Right cardiac atrium (tissue), 5 donors: ENCODE measurements at regions of chr18 and their contacts with region 1.

Region 1: GRCh38 chr18:62584241-62585120 is 61.7 kb downstream of the ZCCHC2 start:
- DNase-seq: peak; percentile 80 to 94 (median 91)
- ATAC-seq: peak; percentile 85 to 87
- H3K4me3 ChIP-seq: no peak overlapping the region
- H3K27ac ChIP-seq: no peak overlapping the region
- H3K4me1 ChIP-seq: no peaks in the 10 kb centered on the region
- H3K27me3 ChIP-seq: no peaks in the 10 kb centered on the region

Region 2: GRCh38 chr18:62186774-62187542 is 397.5 kb before region 1 on chr18 and contains the starts of genes PIGN and RELCH:
- intact Hi-C with region 1: loop called in 2 of 4 experiments (anchors 10 kb)
- DNase-seq: peak; percentile 95 to 97 (median 96)
- ATAC-seq: peak; percentile 99 to 100
- H3K4me3 ChIP-seq: peak within 1 kb of the TSS; percentile 65
- H3K27ac ChIP-seq: peak within 1 kb of the TSS; percentile 88
- H3K4me1 ChIP-seq: no peaks in the 10 kb centered on the region
- H3K27me3 ChIP-seq: no peaks in the 10 kb centered on the region
- total RNA-seq, gene PIGN: 14.4 to 21.6 (median 16.4) TPM
- total RNA-seq, gene RELCH: 13.5 to 22.7 (median 17.2) TPM

Region 3: DNA sequence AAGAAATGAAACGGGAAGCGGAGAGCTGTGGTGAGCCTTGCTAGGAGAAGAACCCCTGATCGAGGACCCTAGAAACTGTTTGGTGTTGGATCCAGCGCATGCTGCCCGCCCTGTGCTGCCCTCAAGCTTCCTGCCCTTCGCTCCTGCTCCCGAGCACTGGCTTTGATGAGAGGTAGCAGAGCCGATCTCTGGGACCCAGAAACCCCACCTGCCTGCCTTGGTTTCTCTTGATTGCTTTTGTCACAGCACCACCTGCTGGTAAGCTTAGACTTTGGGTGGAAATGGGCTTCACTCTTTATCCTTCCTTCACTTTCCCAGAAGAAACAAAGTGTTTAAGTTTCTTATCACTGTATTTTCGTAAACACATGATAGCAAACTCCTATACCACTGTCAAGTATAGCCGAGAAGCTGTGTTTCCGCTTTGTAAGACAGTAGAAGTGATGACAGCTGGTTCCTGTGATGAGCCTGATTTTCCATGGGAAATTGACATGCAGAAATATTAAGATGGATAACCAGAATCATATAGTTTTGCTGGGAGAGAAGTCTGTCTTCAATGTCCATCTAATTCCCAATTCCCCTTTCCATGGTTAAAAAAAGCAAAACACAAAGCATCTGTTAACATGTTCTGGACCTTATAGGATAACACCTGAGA is 398.2 kb after region 1 on chr18:
- intact Hi-C with region 1: loop called (anchors 5 kb)
- DNase-seq: peak; percentile 41 to 69 (median 66)
- ATAC-seq: peak; percentile 67 to 69
- H3K4me3 ChIP-seq: peak overlapping the region; percentile 36
- H3K27ac ChIP-seq: no peak overlapping the region
- H3K4me1 ChIP-seq: no peaks in the 10 kb centered on the region
- H3K27me3 ChIP-seq: no peaks in the 10 kb centered on the region

Region 4: DNA sequence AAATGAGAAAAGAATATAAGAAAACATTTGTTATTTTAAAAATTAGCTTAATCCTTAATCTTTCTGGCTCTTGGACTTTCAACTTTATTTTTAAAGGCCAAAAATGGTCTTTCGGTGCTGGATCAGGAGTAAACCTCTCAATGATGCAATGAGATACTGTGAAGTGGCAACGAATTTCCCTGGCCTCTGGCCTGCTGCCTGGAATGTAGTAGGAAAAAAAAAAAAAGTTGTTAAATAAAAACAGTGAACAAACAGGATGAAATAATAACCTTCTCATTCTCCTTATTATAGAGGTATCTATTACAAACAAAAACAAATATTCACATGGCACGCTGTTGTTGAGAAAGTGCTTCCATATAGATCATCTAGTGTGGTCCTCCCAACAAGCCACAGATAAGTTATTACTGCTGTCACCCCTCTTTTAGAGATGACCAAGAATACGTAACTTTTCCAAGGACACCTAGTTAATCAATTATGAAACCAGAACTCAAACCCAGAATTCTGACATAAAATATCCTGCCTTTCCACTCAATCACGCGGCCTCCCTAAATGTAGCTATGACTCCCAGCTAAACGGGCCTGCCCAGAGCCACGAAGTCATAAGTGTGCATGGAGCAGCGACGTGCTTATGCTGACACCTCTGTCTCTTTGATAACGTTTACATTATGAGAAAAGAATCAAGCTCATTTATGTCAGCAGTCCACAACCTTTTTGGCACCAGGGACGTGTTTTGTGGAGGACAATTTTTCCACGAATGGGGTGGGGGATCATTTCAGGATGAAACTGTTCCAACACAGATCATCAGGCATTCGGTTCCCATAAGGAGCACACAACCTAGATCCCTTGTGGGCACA is 564.2 kb after region 1 on chr18:
- intact Hi-C with region 1: no loop called
- DNase-seq: peak in 2 of 3 donors; percentile 59 to 79
- ATAC-seq: peak; percentile 61 to 68
- H3K4me3 ChIP-seq: no peak overlapping the region
- H3K27ac ChIP-seq: no peak overlapping the region
- H3K4me1 ChIP-seq: peaks cover 7% of the 10 kb centered on the region
- H3K27me3 ChIP-seq: no peaks in the 10 kb centered on the region